Endothelial cell of umbilical vein (primary cell): ENCODE measurements at regions of chr10 and their contacts with region 1.

Region 1: GRCh38 chr10:34994565-34995142 is 95.5 kb downstream of the CUL2 start:
- DNase-seq: peak; percentile 87
- H3K4me3 ChIP-seq: no peak overlapping the region
- H3K27ac ChIP-seq: no peak overlapping the region
- H3K4me1 ChIP-seq: peaks cover 7% of the 10 kb centered on the region
- H3K27me3 ChIP-seq: no peaks in the 10 kb centered on the region
- CTCF ChIP-seq: peak; percentile 67
- POLR2A ChIP-seq: no peak

Region 2: GRCh38 chr10:34655286-34656170 is 339.1 kb before region 1 on chr10:
- CTCF ChIA-PET with region 1: interaction called, 14 read pairs
- POLR2A ChIA-PET with region 1: no interaction called
- dilution Hi-C with region 1: no loop called
- intact Hi-C with region 1: no loop called
- DNase-seq: peak; percentile 86
- H3K4me3 ChIP-seq: no peak overlapping the region
- H3K27ac ChIP-seq: no peak overlapping the region
- H3K4me1 ChIP-seq: no peaks in the 10 kb centered on the region
- H3K27me3 ChIP-seq: no peaks in the 10 kb centered on the region
- CTCF ChIP-seq: peak; percentile 53 to 64
- POLR2A ChIP-seq: no peak

Region 3: DNA sequence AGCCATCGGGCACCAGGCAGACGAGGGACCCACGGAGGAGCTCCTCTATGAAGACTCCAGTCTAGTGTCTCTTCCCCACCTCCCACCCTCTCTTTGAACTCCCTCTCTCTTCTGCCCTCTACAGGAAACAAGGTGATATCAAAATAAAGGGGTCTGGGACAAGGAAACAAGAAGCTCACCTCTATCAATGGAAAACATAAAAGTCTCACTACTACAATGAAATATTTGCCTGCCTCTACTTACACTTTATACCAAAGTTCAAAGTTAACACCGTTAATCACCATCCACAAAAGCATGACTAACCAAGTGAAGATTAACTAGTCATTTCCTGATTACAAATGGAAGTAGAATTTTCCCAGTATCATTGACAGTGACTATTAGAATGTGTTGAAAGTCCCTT is 261.7 kb before region 1 on chr10:
- CTCF ChIA-PET with region 1: interaction called, 12 read pairs
- POLR2A ChIA-PET with region 1: no interaction called
- dilution Hi-C with region 1: no loop called
- intact Hi-C with region 1: no loop called
- DNase-seq: peak; percentile 61
- H3K4me3 ChIP-seq: no peak overlapping the region
- H3K27ac ChIP-seq: peak overlapping the region; percentile 88
- H3K4me1 ChIP-seq: peaks cover 30% of the 10 kb centered on the region
- H3K27me3 ChIP-seq: no peaks in the 10 kb centered on the region
- CTCF ChIP-seq: no peak
- POLR2A ChIP-seq: no peak

Region 4: GRCh38 chr10:34922143-34922542 is 72.5 kb before region 1 on chr10:
- CTCF ChIA-PET with region 1: no interaction called
- POLR2A ChIA-PET with region 1: no interaction called
- dilution Hi-C with region 1: no loop called
- intact Hi-C with region 1: no loop called
- DNase-seq: no peak
- H3K4me3 ChIP-seq: no peak overlapping the region
- H3K27ac ChIP-seq: no peak overlapping the region
- H3K4me1 ChIP-seq: no peaks in the 10 kb centered on the region
- H3K27me3 ChIP-seq: peaks cover 2% of the 10 kb centered on the region in 2 experiments
- CTCF ChIP-seq: no peak
- POLR2A ChIP-seq: no peak

Region 5: GRCh38 chr10:35019041-35020024 is 24.7 kb after region 1 on chr10:
- CTCF ChIA-PET with region 1: interaction called, 19 read pairs
- POLR2A ChIA-PET with region 1: interaction called, 3 read pairs
- dilution Hi-C with region 1: no loop called
- intact Hi-C with region 1: no loop called
- DNase-seq: no peak
- H3K4me3 ChIP-seq: no peak overlapping the region
- H3K27ac ChIP-seq: no peak overlapping the region
- H3K4me1 ChIP-seq: no peaks in the 10 kb centered on the region
- H3K27me3 ChIP-seq: no peaks in the 10 kb centered on the region
- CTCF ChIP-seq: no peak
- POLR2A ChIP-seq: no peak

Region 6: GRCh38 chr10:35090162-35090954 is 95.7 kb after region 1 on chr10 and contains the start of gene CUL2:
- CTCF ChIA-PET with region 1: interaction called, 3 read pairs
- POLR2A ChIA-PET with region 1: no interaction called
- dilution Hi-C with region 1: no loop called
- intact Hi-C with region 1: loop called (anchors 5 kb)
- DNase-seq: peak; percentile 95
- H3K4me3 ChIP-seq: peak within 1 kb of the TSS; percentile 75 to 98 (median 93)
- H3K27ac ChIP-seq: peak within 1 kb of the TSS; percentile 71
- H3K4me1 ChIP-seq: peaks cover 13% of the 10 kb centered on the region
- H3K27me3 ChIP-seq: no peaks in the 10 kb centered on the region
- CTCF ChIP-seq: no peak
- POLR2A ChIP-seq: peak; percentile 50
- total RNA-seq, gene CUL2: 45.3 and 47.5 TPM in 2 replicates

Region 7: GRCh38 chr10:35195361-35196306 is 201.0 kb after region 1 on chr10:
- CTCF ChIA-PET with region 1: interaction called, 9 read pairs
- POLR2A ChIA-PET with region 1: no interaction called
- dilution Hi-C with region 1: no loop called
- intact Hi-C with region 1: loop called (anchors 1 kb)
- DNase-seq: peak; percentile 99
- H3K4me3 ChIP-seq: peak overlapping the region; percentile 39 to 89 (median 67)
- H3K27ac ChIP-seq: peak overlapping the region; percentile 98
- H3K4me1 ChIP-seq: peaks cover 20% of the 10 kb centered on the region
- H3K27me3 ChIP-seq: no peaks in the 10 kb centered on the region
- CTCF ChIP-seq: peak; percentile 68 to 71
- POLR2A ChIP-seq: no peak